ENCODE measurements at regions of chr6 and their contacts with region 1.

Region 1: GRCh38 chr6:25263657-25264056 is 15.5 kb upstream of the CARMIL1 start:
- DNase-seq: no peak
- H3K4me3 ChIP-seq: no peak overlapping the region
- H3K27ac ChIP-seq: no peak overlapping the region
- H3K4me1 ChIP-seq: peaks cover 0 to 8% of the 10 kb centered on the region in 2 donors
- H3K27me3 ChIP-seq: no peaks in the 10 kb centered on the region
- CTCF ChIP-seq: no peak
- POLR2A ChIP-seq: no peak

Region 2: DNA sequence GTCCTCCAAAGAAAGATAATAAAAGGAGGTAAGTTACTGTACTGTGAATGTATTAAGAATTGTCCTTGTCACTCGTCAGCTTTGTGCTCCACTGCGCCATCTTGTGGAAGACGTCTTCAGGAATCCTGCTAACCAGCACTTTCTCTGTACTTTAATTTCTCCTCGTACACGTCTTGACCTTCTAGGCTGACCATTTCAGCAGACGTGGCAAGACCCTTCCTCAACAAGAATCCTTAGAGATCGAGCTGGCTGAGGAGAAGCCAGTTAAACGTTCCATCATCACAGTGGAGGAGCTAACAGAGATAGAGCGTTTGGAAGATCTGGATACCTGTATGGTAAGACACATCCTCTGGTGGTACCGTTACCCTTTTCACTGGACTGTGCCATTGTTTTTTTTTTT is 292.9 kb after region 1 on chr6:
- intact Hi-C with region 1: loop called in 1 of 2 experiments (anchors 5 kb)
- DNase-seq: peak; percentile 66 to 93 (median 86)
- H3K4me3 ChIP-seq: no peak overlapping the region
- H3K27ac ChIP-seq: no peak overlapping the region
- H3K4me1 ChIP-seq: no peaks in the 10 kb centered on the region
- H3K27me3 ChIP-seq: no peaks in the 10 kb centered on the region
- CTCF ChIP-seq: peak; percentile 59 to 88 (median 76)
- POLR2A ChIP-seq: no peak

Region 3: GRCh38 chr6:25601800-25602673 is 338.4 kb after region 1 on chr6:
- intact Hi-C with region 1: loop called in 1 of 2 experiments (anchors 10 kb)
- DNase-seq: no peak
- H3K4me3 ChIP-seq: no peak overlapping the region
- H3K27ac ChIP-seq: no peak overlapping the region
- H3K4me1 ChIP-seq: no peaks in the 10 kb centered on the region
- H3K27me3 ChIP-seq: no peaks in the 10 kb centered on the region
- CTCF ChIP-seq: peak; percentile 46 to 76 (median 64)
- POLR2A ChIP-seq: no peak

Measured in adrenal gland (tissue), 19 donors.